AG04450 (cell line): ENCODE measurements at regions of chr21 and their contacts with region 1.

Region 1: DNA sequence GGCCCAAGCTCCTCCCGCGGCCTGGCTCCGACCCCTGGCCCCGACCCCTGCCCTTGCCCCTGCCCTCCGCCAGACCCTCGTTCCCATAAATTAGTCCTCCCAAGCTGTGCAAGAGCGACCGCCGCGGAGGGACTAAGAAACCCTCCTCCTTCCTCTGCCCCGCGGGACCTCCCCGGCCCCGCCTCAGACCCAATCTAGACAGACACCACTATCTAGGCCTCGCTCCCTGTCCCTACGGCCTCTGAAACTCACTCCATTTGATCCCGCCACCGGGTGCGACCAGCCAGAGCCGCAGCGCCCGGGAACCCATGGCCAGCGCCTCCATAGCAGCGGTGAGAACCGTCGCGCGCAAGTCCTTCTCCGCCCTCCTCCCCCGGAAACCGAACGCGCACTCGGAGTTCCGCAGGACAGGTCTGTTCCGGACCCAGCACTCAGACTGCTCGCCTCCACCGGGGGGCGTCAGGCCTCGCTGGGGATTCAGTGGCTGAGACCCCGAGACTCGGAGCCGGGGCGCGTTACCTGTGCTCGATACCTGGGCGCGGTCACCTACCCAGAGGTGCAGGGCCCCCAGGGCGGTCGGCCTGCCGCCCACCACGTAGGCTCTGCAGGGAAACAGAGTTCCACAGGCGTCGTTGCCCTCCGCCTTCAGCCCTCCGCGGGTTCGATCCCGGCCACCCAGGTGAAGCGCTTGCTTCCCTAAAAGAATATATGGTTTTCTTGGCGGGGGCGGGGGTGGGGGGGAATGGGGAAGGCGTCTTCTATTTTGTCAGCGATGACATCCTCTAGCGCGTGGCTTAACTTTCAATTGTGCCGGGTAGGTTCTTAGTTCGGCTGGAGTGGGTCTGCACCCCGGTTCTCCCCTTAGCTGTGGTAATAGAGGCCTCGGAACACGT is at the start of gene MRPL39:
- DNase-seq: peak; percentile 77
- H3K4me3 ChIP-seq: peak within 1 kb of the TSS; percentile 83
- H3K27ac ChIP-seq: peak within 1 kb of the TSS; percentile 75
- H3K27me3 ChIP-seq: no peaks in the 10 kb centered on the region
- CTCF ChIP-seq: peak; percentile 77
- polyA plus RNA-seq, gene MRPL39: 22.8 and 37.0 TPM in 2 replicates

Region 2: GRCh38 chr21:25639551-25640201 is 32.3 kb after region 1 on chr21:
- CTCF ChIA-PET with region 1: interaction called, 16 read pairs
- POLR2A ChIA-PET with region 1: no interaction called
- DNase-seq: no peak
- H3K4me3 ChIP-seq: peak overlapping the region; percentile 76
- H3K27ac ChIP-seq: peak overlapping the region; percentile 4
- H3K27me3 ChIP-seq: no peaks in the 10 kb centered on the region
- CTCF ChIP-seq: peak; percentile 42

Region 3: DNA sequence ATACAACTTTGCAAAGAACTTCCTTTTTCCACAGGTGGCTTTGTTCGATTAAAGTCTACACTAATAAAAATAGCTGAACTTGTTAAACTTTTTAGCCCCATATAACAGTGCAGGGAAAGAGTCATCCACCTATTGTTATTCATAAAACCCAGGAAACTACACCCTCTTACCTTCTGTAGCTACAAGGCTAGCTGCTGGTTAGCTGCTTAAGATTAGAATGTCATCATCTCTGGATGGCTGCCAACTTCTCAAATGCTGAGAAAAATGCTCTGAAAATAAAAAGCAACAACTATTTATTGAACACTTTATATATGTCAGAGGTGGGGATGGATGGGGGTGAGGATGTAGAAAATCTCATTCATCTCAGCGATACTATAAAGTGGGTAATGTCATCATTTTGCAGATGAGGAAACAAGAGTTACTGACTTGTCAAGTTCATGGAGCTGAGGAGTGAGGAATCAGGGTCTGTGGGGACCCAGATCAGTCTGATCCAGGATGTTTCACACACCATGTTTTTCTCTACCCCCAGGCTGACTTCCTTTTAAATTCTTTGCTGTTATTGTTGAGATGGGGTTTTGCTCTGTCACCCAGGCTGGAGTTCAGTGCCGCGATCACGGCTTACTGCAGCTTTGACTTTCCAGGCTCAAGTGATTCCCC is 110.2 kb after region 1 on chr21:
- CTCF ChIA-PET with region 1: interaction called, 54 read pairs
- POLR2A ChIA-PET with region 1: no interaction called
- DNase-seq: no peak
- H3K4me3 ChIP-seq: no peak overlapping the region
- H3K27ac ChIP-seq: no peak overlapping the region
- H3K27me3 ChIP-seq: no peaks in the 10 kb centered on the region
- CTCF ChIP-seq: no peak

Region 4: DNA sequence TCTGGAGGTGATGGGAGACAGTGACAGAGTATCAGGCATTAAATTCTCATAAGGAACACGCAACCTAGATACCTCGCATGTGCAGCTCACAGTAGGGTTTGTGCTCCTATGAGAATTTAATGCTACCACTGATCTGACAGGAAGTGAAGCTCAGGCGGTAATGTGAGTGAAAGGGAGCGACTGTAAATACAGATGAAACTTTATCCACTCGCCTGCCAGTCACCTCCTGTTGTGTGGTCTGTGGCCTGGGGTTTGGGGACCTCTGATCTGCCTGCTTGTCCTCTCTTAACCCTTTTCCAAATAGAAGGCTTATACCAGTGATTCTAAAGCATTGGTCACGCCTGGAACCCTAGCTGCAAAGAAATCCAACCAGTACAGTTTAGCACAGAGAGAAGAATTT is 142.7 kb after region 1 on chr21:
- CTCF ChIA-PET with region 1: interaction called, 11 read pairs
- POLR2A ChIA-PET with region 1: no interaction called
- DNase-seq: no peak
- H3K4me3 ChIP-seq: no peak overlapping the region
- H3K27ac ChIP-seq: no peak overlapping the region
- H3K27me3 ChIP-seq: no peaks in the 10 kb centered on the region
- CTCF ChIP-seq: no peak

Region 5: DNA sequence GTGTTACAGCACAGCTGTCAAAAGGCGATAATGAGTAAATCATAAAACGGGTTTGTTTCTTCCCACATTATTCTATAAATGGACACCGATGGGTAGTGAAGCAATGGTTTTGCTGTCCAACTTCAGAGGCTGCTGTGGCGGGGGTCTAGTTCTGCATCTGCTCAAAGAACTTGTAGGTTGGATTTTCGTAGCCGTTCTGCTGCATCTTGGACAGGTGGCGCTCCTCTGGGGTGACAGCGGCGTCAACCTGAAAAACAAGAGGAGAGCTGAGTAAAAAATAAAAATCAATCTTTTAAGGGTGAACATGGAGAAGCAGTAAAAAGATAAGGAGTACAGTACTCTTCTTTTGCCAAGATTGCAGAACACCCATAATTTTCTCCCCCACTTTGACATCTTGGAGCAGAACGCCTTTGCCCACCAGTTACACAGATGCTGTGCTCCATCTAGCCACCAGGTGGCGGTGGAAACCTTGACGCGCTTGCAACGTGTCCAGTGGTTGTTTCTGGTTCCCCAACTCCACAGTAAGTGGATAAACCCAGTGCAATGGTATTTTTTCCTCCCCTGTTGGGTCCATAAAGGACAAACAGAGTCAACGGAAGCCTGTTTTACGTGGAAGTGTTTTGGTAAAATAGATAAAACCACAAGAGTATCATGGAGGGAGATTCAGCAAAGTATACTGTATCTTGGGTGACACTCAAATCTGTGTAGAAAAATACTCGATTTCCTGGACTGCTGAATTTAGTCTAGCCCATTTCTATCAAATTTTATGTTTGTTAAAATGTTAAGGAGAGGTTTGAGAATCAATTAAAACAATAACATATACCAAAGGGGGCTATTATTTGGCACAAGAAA is 274.4 kb after region 1 on chr21:
- CTCF ChIA-PET with region 1: interaction called, 12 read pairs
- POLR2A ChIA-PET with region 1: no interaction called
- DNase-seq: peak; percentile 16
- H3K4me3 ChIP-seq: no peak overlapping the region
- H3K27ac ChIP-seq: no peak overlapping the region
- H3K27me3 ChIP-seq: no peaks in the 10 kb centered on the region
- CTCF ChIP-seq: peak; percentile 97